Panc1 (cell line): ENCODE measurements at regions of chr1 and their contacts with region 1.

Region 1: GRCh38 chr1:25714372-25714931 is 85.5 kb upstream of the SELENON start:
- DNase-seq: no peak
- ATAC-seq: no peak
- H3K4me3 ChIP-seq: no peak overlapping the region
- H3K27ac ChIP-seq: no peak overlapping the region
- H3K4me1 ChIP-seq: no peaks in the 10 kb centered on the region
- H3K27me3 ChIP-seq: no peaks in the 10 kb centered on the region
- CTCF ChIP-seq: no peak

Region 2: GRCh38 chr1:25837262-25837875 is 122.9 kb after region 1 on chr1:
- CTCF ChIA-PET with region 1: no interaction called
- POLR2A ChIA-PET with region 1: no interaction called
- in situ Hi-C with region 1: no loop called
- intact Hi-C with region 1: no loop called
- DNase-seq: no peak
- ATAC-seq: no peak
- H3K4me3 ChIP-seq: no peak overlapping the region
- H3K27ac ChIP-seq: no peak overlapping the region
- H3K4me1 ChIP-seq: peaks cover 5% of the 10 kb centered on the region; the same call in 1 of the 2 replicates
- H3K27me3 ChIP-seq: no peaks in the 10 kb centered on the region
- CTCF ChIP-seq: peak; percentile 63; the same call in 1 of the 2 replicates

Region 3: GRCh38 chr1:26169669-26170471 is 455.4 kb after region 1 on chr1 and contains the start of gene ZNF593:
- CTCF ChIA-PET with region 1: no interaction called
- POLR2A ChIA-PET with region 1: no interaction called
- in situ Hi-C with region 1: no loop called
- intact Hi-C with region 1: no loop called
- DNase-seq: peak; percentile 61
- ATAC-seq: peak; percentile 97
- H3K4me3 ChIP-seq: peak within 1 kb of the TSS; percentile 87 to 95
- H3K27ac ChIP-seq: peak within 1 kb of the TSS; percentile 93
- H3K4me1 ChIP-seq: peaks cover 17% of the 10 kb centered on the region
- H3K27me3 ChIP-seq: no peaks in the 10 kb centered on the region
- CTCF ChIP-seq: peak; percentile 98
- total RNA-seq, gene ZNF593: 108 TPM

Region 4: DNA sequence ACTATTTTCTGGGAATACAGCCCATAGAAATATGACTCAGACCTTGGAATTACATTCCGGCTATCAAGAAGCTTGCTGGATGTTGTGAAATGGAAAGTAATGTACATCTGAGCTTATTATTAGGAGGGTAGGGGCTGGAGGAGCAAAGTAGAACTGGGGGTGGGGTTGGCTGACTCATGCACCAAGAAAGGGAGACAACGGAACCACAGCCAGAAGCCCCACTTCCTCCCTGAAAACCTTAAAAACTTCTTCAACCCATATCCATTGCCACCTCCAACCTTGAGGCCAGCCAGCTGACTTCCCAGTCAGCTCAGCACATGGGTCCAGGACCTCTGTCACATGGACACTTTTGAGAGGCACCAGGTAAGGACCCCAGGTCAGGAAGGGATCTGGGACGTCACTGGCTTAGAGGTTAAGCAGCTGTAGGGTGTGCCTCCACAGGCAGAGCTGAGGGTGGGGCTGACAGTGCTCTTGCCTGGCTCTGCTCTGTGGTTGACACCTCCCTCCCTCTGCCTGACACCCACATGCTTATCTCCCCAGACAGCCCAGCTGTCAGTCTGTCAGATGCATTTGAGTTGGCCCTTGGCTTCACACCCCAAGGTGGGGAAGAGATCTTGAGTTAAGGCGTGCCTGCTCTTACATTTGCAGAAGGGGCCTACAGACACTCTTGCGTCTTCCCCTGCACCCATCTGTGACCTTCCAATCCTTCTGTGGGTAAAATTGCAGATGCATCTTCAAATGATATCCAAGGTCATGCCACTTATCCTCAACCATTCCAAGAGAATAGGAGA is 663.8 kb after region 1 on chr1:
- CTCF ChIA-PET with region 1: interaction called, 10 read pairs
- POLR2A ChIA-PET with region 1: no interaction called
- in situ Hi-C with region 1: no loop called
- intact Hi-C with region 1: no loop called
- DNase-seq: peak; percentile 79
- ATAC-seq: peak; percentile 75
- H3K4me3 ChIP-seq: no peak overlapping the region
- H3K27ac ChIP-seq: no peak overlapping the region
- H3K4me1 ChIP-seq: no peaks in the 10 kb centered on the region
- H3K27me3 ChIP-seq: no peaks in the 10 kb centered on the region
- CTCF ChIP-seq: no peak